Dorsolateral prefrontal cortex (tissue), 120 donors: ENCODE measurements at regions of chrX and their contacts with region 1.

Region 1: GRCh38 chrX:153875391-153876111 is 10.4 kb downstream of the L1CAM start:
- DNase-seq: peak in 6 of 10 donors; percentile 29 to 76 (median 48)
- H3K4me3 ChIP-seq: peak overlapping the region in 51 of 59 donors; percentile 5 to 60 (median 41)
- H3K27ac ChIP-seq: peak overlapping the region in 16 of 59 donors; percentile 18 to 71 (median 42)
- H3K27me3 ChIP-seq: peaks cover 0 to 88% (median 39%) of the 10 kb centered on the region in 45 donors
- CTCF ChIP-seq: peak in 1 of 56 donors; percentile 14

Region 2: GRCh38 chrX:153971450-153972367 is 96.2 kb after region 1 on chrX and contains the start of gene HCFC1:
- intact Hi-C with region 1: loop called in 1 of 2 experiments (anchors 5 kb)
- DNase-seq: peak; percentile 83 to 92 (median 89)
- H3K4me3 ChIP-seq: peak within 1 kb of the TSS; percentile 54 to 94 (median 77)
- H3K27ac ChIP-seq: peak within 1 kb of the TSS; percentile 97 to 100 (median 99)
- H3K27me3 ChIP-seq: peaks cover 0 to 23% (median 0%) of the 10 kb centered on the region in 45 donors
- CTCF ChIP-seq: no peak
- total RNA-seq, gene HCFC1: 41.2 to 97.5 (median 57.4) TPM

Region 3: DNA sequence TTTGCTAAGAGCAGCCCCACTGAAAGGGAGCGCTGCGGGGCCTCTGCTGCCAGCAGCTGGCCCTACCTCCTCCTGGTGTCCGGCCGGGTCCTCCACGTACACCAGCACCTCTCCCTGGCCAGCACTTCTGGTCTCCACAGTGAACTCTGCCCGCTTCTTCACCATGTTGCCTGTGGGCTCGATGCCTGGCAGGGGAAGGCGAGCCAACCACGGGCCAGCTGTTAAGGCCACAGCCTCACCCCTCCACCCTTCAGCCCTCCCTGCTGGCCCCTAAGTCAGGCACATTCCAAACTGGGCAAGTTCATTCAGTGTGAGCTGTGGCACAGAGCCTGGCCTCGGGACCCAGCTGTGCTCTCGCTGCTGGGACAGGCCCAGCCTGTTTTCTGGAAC is 491.1 kb after region 1 on chrX:
- intact Hi-C with region 1: no loop called
- DNase-seq: peak in 4 of 10 donors; percentile 30 to 60 (median 44)
- H3K4me3 ChIP-seq: no peak overlapping the region
- H3K27ac ChIP-seq: peak overlapping the region in 47 of 59 donors; percentile 17 to 89 (median 74)
- H3K27me3 ChIP-seq: peaks cover 0 to 49% (median 0%) of the 10 kb centered on the region in 45 donors
- CTCF ChIP-seq: no peak